GM12878 (cell line): ENCODE measurements at regions of chr4 and their contacts with region 1.

Region 1: GRCh38 chr4:152735396-152735859 is 44.1 kb downstream of the TIGD4 start:
- DNase-seq: peak; percentile 32
- ATAC-seq: peak; percentile 81
- H3K4me3 ChIP-seq: no peak overlapping the region
- H3K27ac ChIP-seq: no peak overlapping the region
- H3K4me1 ChIP-seq: peaks cover 8% of the 10 kb centered on the region; the same call in 1 of the 2 replicates
- H3K27me3 ChIP-seq: no peaks in the 10 kb centered on the region
- CTCF ChIP-seq: peak; percentile 58 to 71 (median 60); a peak in 5 of 6 replicates
- EP300 ChIP-seq: no peak
- POLR2A ChIP-seq: no peak
- RAD21 ChIP-seq: peak; percentile 85

Region 2: GRCh38 chr4:152454398-152455011 is 280.9 kb before region 1 on chr4:
- CTCF ChIA-PET with region 1: interaction called, 45 read pairs
- POLR2A ChIA-PET with region 1: no interaction called
- RAD21 ChIA-PET with region 1: interaction called, 20 read pairs
- SMC1A ChIA-PET with region 1: interaction called, 31 read pairs
- in situ Hi-C with region 1: no loop called
- intact Hi-C with region 1: loop called (anchors 2 kb)
- DNase-seq: no peak
- ATAC-seq: peak; percentile 15; the same call in 2 of the 3 replicates
- H3K4me3 ChIP-seq: no peak overlapping the region
- H3K27ac ChIP-seq: no peak overlapping the region
- H3K4me1 ChIP-seq: peaks cover 12% of the 10 kb centered on the region
- H3K27me3 ChIP-seq: no peaks in the 10 kb centered on the region
- CTCF ChIP-seq: peak; percentile 50 to 60 (median 60)
- EP300 ChIP-seq: no peak
- POLR2A ChIP-seq: no peak
- RAD21 ChIP-seq: peak; percentile 65

Region 3: DNA sequence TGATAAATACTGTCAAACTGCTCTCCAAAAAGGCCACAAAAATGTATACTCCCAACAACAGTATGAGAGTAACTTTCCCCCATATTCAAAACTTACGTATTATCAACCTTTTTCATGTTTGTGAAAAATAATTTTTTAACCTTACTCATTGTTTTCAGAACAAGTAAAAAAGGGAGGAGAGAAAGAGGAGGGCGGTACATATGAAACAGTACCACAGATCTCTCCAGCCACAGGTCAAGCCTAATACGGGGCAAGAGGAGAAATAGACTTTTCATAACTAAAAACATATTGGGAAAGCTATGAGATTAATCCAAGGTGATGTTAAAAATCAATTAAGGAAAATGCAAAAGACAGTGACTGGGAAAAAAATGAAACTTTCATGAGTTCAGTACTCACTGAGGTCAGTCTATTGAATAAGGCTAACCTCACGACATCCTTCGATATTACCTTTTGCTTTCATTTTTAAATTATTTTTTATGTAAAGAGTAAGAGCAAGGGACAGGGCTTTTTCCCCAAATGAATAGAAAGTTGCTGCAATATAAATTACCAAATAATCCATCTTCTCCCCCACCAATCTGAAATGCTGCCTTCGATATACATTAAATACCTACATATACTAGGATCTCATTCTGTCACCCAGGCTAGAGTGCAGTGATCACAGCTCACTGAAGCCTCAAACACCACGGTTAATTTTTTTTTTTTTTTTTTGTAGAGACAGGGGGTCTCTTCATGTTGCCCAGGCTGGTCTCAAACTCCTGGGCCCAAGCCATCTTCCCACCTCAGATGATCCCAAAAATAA is 224.9 kb before region 1 on chr4:
- CTCF ChIA-PET with region 1: interaction called, 3 read pairs
- POLR2A ChIA-PET with region 1: no interaction called
- RAD21 ChIA-PET with region 1: no interaction called
- SMC1A ChIA-PET with region 1: interaction called, 3 read pairs
- in situ Hi-C with region 1: loop called (anchors 5 kb)
- intact Hi-C with region 1: no loop called
- DNase-seq: no peak
- ATAC-seq: peak; percentile 71
- H3K4me3 ChIP-seq: peak overlapping the region; percentile 61; the same call in 1 of the 2 replicates
- H3K27ac ChIP-seq: peak overlapping the region; percentile 74
- H3K4me1 ChIP-seq: peaks cover 24% of the 10 kb centered on the region
- H3K27me3 ChIP-seq: no peaks in the 10 kb centered on the region
- CTCF ChIP-seq: no peak
- EP300 ChIP-seq: no peak
- POLR2A ChIP-seq: no peak
- RAD21 ChIP-seq: no peak

Region 4: GRCh38 chr4:152663203-152664066 is 72.0 kb before region 1 on chr4:
- CTCF ChIA-PET with region 1: interaction called, 3 read pairs
- POLR2A ChIA-PET with region 1: no interaction called
- RAD21 ChIA-PET with region 1: interaction called, 3 read pairs
- SMC1A ChIA-PET with region 1: interaction called, 19 read pairs
- in situ Hi-C with region 1: no loop called
- intact Hi-C with region 1: no loop called
- DNase-seq: peak; percentile 75
- ATAC-seq: peak; percentile 78
- H3K4me3 ChIP-seq: peak overlapping the region; percentile 51; the same call in 1 of the 2 replicates
- H3K27ac ChIP-seq: peak overlapping the region; percentile 79
- H3K4me1 ChIP-seq: peaks cover 66% of the 10 kb centered on the region
- H3K27me3 ChIP-seq: no peaks in the 10 kb centered on the region
- CTCF ChIP-seq: no peak
- EP300 ChIP-seq: peak in 1 of 2 experiments; percentile 32; a peak in 1 of 4 replicates
- POLR2A ChIP-seq: no peak
- RAD21 ChIP-seq: no peak

Region 5: DNA sequence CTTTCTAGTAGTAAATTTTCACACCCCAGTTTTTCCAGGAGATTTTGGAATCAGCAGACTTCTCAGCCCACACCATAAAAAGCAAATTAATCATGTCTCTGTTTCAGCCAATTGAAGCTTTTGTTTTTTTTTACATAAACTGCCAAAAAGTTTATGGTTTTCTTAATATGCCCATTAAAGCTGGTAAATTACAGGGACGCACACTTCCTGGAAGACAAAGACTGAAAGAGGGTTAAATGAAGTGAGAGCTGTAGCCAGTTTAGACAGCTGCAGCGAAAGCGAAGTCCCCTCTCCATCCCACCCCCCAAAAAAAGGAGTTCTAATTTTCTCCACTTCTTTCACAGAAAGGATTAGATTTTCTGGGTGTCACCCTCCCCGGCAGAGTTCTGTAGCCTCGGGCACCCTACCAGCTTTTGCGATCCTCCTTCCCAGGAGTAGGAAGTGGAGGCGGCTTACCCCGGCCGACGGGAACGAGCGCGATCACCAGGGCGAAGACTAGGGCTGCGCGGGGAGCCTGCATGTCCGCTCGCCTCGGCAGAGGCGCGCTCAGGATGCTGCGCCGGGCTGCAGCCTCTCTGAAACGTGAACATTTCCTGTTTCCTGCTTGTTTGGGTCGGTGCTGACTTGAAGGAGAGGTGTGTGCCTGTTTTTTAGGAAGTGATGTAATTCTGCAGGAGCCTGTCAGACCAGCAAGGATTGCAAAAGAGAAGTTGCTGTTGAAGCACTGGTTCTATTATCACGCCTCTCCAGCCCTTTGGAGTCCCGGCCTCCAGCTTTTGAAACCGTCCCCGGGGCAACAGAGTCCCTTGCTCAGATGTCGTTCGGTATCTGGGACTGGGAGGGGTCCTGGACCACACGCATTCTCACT is 55.8 kb before region 1 on chr4 and contains the start of gene TMEM154:
- CTCF ChIA-PET with region 1: interaction called, 46 read pairs
- POLR2A ChIA-PET with region 1: no interaction called
- RAD21 ChIA-PET with region 1: interaction called, 27 read pairs
- SMC1A ChIA-PET with region 1: interaction called, 63 read pairs
- in situ Hi-C with region 1: no loop called
- intact Hi-C with region 1: no loop called
- DNase-seq: no peak
- ATAC-seq: peak; percentile 80
- H3K4me3 ChIP-seq: peak within 1 kb of the TSS; percentile 89
- H3K27ac ChIP-seq: peak within 1 kb of the TSS; percentile 54
- H3K4me1 ChIP-seq: peaks cover 41% of the 10 kb centered on the region
- H3K27me3 ChIP-seq: no peaks in the 10 kb centered on the region
- CTCF ChIP-seq: 0 out of 6 replicates have a peak, but pooled peaks of 1 of the 3 experiments have one; percentile 7
- EP300 ChIP-seq: 0 out of 4 replicates have a peak, but pooled peaks of 1 of the 2 experiments have one; percentile 20
- POLR2A ChIP-seq: peak; percentile 95
- RAD21 ChIP-seq: no peak
- polyA plus RNA-seq, gene TMEM154: 9.3 to 17.6 TPM

Region 6: DNA sequence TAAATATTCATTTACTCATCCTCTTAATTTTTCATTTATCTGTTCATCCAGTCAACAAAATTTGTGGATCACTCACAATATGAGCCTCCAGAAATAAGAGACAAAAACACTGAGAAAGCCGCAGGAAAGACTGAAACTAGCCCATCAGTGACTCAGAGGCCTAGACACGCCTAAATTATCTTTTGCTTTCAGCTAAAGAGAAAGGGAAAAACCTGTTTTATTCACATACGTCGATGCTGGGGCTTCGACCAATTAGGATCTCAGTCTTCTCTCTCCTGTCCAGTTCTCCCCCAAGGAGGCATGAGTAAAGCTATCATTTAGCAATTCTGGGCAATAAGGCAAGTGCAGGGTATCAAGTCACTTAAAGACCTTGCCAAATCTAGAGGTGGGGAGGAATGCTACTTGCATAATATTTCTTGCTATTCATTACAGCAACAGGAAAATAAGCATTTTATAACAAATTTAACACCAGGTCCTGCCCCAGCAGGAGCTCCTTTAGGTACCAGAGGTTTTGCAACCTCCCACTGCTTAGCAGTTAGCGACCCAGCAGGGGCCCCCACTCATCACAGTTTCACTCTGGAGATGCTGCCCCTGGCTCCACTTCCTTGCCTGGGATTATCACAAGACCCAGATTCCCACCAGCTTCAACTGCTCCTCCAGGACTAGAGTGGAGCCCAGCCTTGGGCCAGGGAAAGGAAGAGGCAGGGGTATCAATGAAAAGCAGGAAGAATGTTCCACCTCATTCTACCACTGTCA is 25.6 kb before region 1 on chr4:
- CTCF ChIA-PET with region 1: interaction called, 13 read pairs
- POLR2A ChIA-PET with region 1: no interaction called
- RAD21 ChIA-PET with region 1: interaction called, 3 read pairs
- SMC1A ChIA-PET with region 1: interaction called, 10 read pairs
- in situ Hi-C with region 1: no loop called
- intact Hi-C with region 1: no loop called
- DNase-seq: peak; percentile 42
- ATAC-seq: peak; percentile 95
- H3K4me3 ChIP-seq: no peak overlapping the region
- H3K27ac ChIP-seq: peak overlapping the region; percentile 45
- H3K4me1 ChIP-seq: peaks cover 11% of the 10 kb centered on the region
- H3K27me3 ChIP-seq: no peaks in the 10 kb centered on the region
- CTCF ChIP-seq: no peak
- EP300 ChIP-seq: no peak; a peak in 1 of 4 replicates
- POLR2A ChIP-seq: no peak
- RAD21 ChIP-seq: no peak

Region 7: GRCh38 chr4:152779513-152780266 is 44.3 kb after region 1 on chr4 and contains the starts of genes ARFIP1 and TIGD4:
- CTCF ChIA-PET with region 1: interaction called, 12 read pairs
- POLR2A ChIA-PET with region 1: no interaction called
- RAD21 ChIA-PET with region 1: interaction called, 8 read pairs
- SMC1A ChIA-PET with region 1: interaction called, 5 read pairs
- in situ Hi-C with region 1: no loop called
- intact Hi-C with region 1: no loop called
- DNase-seq: peak; percentile 90
- ATAC-seq: peak; percentile 93
- H3K4me3 ChIP-seq: peak within 1 kb of the TSS; percentile 91
- H3K27ac ChIP-seq: peak within 1 kb of the TSS; percentile 87
- H3K4me1 ChIP-seq: peaks cover 5% of the 10 kb centered on the region
- H3K27me3 ChIP-seq: no peaks in the 10 kb centered on the region
- CTCF ChIP-seq: peak; percentile 23 to 50 (median 35); a peak in 5 of 6 replicates
- EP300 ChIP-seq: no peak
- POLR2A ChIP-seq: peak; percentile 84
- RAD21 ChIP-seq: peak; percentile 35; the same call in 1 of the 2 replicates
- polyA plus RNA-seq, gene ARFIP1: 9.5 to 11.0 TPM
- polyA plus RNA-seq, gene TIGD4: 0.24 to 0.31 TPM